Activated CD8-positive, alpha-beta T cell treated with anti-CD3 and anti-CD28 coated beads for 36 hours (primary cell): ENCODE measurements at regions of chr1 and their contacts with region 1.

Region 1: DNA sequence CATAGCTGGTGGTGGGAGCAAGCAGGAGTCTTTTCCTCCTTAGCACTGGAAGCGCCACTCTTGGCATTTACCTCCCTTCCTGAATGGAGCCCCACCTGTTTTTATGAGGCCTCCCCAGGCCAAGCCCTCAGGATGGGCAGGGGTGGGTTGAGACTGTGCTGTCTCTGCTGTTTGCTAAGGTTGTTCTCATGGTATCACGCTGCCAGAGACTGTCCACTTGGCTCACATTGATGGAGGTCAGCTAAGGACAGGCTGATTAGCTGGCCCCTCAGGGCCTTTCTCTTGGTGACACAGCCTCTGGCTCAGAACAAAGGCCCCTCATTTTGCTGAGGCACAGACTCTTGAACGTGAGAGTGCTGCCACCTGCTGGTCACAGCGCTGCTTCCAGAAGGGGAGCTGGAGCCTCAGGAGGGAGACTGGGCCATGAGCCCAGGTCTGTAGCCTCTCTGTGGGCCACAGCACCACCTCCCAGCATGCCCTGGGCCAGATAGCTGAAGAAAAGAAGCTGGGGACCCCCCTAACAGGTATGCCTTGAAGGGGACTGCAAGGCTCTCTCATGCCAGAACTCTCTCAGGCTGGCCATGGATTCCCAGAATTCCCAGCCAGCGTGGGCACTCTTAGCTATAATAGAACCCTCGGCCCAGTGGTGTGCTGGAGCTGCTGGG is 85.6 kb downstream of the CD58 start:
- DNase-seq: peak; percentile 95
- ATAC-seq: peak; percentile 96
- H3K4me3 Mint-ChIP-seq: no peak overlapping the region
- H3K27ac Mint-ChIP-seq: no peak overlapping the region
- H3K4me1 Mint-ChIP-seq: peaks cover 4% of the 10 kb centered on the region
- H3K27me3 Mint-ChIP-seq: no peaks in the 10 kb centered on the region
- CTCF ChIP-seq: peak; percentile 94

Region 2: GRCh38 chr1:116139592-116140134 is 345.5 kb before region 1 on chr1:
- CTCF ChIA-PET with region 1: interaction called, 460 read pairs
- POLR2A ChIA-PET with region 1: interaction called, 6 read pairs
- intact Hi-C with region 1: loop called (anchors 1 kb)
- DNase-seq: no peak
- ATAC-seq: no peak
- H3K4me3 Mint-ChIP-seq: no peak overlapping the region
- H3K27ac Mint-ChIP-seq: no peak overlapping the region
- H3K4me1 Mint-ChIP-seq: peaks cover 6% of the 10 kb centered on the region
- H3K27me3 Mint-ChIP-seq: peaks cover 2% of the 10 kb centered on the region
- CTCF ChIP-seq: no peak

Region 3: GRCh38 chr1:116321766-116322175 is 163.4 kb before region 1 on chr1:
- CTCF ChIA-PET with region 1: interaction called, 11 read pairs
- POLR2A ChIA-PET with region 1: no interaction called
- intact Hi-C with region 1: no loop called
- DNase-seq: no peak
- ATAC-seq: no peak
- H3K4me3 Mint-ChIP-seq: no peak overlapping the region
- H3K27ac Mint-ChIP-seq: no peak overlapping the region
- H3K4me1 Mint-ChIP-seq: peaks cover 49% of the 10 kb centered on the region
- H3K27me3 Mint-ChIP-seq: no peaks in the 10 kb centered on the region
- CTCF ChIP-seq: no peak

Region 4: DNA sequence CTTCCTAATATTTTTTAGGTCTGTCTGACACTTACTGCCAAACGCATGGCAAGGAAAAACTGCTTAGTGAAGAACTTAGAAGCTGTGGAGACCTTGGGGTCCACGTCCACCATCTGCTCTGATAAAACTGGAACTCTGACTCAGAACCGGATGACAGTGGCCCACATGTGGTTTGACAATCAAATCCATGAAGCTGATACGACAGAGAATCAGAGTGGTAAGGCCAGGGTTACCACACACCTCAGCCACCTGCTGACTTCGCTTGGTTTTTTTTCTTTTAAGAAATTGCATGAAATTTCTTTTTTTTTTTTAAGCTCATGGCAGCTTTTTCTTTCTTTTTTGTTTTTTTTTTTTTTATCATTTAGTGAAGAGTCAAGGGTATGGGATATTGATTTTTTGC is 95.0 kb before region 1 on chr1:
- CTCF ChIA-PET with region 1: interaction called, 13 read pairs
- POLR2A ChIA-PET with region 1: interaction called, 3 read pairs
- intact Hi-C with region 1: no loop called
- DNase-seq: peak; percentile 82
- ATAC-seq: peak; percentile 93
- H3K4me3 Mint-ChIP-seq: no peak overlapping the region
- H3K27ac Mint-ChIP-seq: no peak overlapping the region
- H3K4me1 Mint-ChIP-seq: peaks cover 55% of the 10 kb centered on the region
- H3K27me3 Mint-ChIP-seq: no peaks in the 10 kb centered on the region
- CTCF ChIP-seq: no peak

Region 5: DNA sequence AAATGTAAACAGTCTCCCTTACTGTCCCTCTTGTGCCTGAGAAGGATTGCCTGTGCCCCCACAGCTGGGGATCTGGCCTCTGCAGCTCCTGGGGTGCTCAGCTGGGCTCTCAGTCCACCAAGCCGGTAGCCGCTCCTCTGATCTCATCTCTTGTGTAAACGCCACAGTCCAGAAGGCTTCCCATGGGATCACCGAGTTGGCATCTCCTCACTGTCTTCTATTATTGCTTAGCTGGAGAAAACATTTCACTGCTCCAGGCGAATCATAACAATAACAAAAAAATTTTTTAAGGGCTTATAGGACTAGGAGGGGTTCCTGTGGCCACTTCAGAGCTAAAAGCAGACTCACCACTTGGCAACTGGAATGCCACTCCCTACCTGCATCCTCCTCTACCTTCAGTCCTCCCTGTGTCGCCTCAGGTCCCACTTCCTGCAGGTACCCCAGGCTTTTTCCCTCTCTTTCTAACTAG is 36.4 kb before region 1 on chr1:
- CTCF ChIA-PET with region 1: interaction called, 13 read pairs
- POLR2A ChIA-PET with region 1: no interaction called
- intact Hi-C with region 1: no loop called
- DNase-seq: no peak
- ATAC-seq: no peak
- H3K4me3 Mint-ChIP-seq: no peak overlapping the region
- H3K27ac Mint-ChIP-seq: no peak overlapping the region
- H3K4me1 Mint-ChIP-seq: no peaks in the 10 kb centered on the region
- H3K27me3 Mint-ChIP-seq: no peaks in the 10 kb centered on the region
- CTCF ChIP-seq: no peak

Region 6: DNA sequence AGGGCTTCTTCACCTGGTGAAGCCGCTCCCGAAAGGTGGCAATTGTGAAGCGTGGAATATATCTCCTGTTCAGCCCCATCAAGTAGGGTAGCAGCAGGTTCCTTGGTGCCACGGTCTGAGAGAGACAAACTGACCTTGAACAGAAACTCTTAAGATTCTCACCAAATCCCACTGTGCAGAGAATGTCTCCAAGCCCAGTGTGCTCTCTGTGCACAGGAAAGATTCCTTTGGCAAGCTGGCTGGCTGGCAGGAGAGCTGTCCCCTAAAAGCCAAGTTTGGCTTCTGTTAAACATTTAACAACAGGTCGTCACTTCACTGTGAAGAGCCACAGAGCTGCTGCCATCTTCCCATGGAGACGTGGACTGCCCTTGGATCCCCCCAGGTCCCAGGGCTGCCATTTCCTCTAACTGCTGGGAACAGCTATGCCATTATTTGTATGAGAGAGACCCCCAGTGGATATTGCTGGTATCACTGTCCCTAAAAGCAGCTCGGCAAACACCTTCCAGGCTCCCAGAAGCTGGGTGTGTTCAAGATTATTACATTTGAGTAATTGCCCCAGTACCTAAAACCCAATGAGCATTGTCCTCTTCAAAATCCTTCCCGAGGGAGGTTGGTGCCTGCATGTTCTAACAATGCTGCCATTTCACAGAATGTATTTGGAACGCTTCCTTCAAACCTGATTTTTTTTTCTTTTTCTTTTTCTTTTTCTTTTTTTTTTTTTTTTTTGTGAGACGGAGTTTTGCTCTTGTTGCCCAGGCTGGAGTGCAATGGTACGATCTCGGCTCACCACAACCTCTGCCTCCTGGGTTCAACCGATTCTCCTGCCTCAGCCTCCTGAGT is 13.8 kb after region 1 on chr1:
- CTCF ChIA-PET with region 1: interaction called, 177 read pairs
- POLR2A ChIA-PET with region 1: interaction called, 4 read pairs
- intact Hi-C with region 1: no loop called
- DNase-seq: peak; percentile 67
- ATAC-seq: peak; percentile 78
- H3K4me3 Mint-ChIP-seq: no peak overlapping the region
- H3K27ac Mint-ChIP-seq: no peak overlapping the region
- H3K4me1 Mint-ChIP-seq: peaks cover 23% of the 10 kb centered on the region
- H3K27me3 Mint-ChIP-seq: no peaks in the 10 kb centered on the region
- CTCF ChIP-seq: peak; percentile 88

Region 7: DNA sequence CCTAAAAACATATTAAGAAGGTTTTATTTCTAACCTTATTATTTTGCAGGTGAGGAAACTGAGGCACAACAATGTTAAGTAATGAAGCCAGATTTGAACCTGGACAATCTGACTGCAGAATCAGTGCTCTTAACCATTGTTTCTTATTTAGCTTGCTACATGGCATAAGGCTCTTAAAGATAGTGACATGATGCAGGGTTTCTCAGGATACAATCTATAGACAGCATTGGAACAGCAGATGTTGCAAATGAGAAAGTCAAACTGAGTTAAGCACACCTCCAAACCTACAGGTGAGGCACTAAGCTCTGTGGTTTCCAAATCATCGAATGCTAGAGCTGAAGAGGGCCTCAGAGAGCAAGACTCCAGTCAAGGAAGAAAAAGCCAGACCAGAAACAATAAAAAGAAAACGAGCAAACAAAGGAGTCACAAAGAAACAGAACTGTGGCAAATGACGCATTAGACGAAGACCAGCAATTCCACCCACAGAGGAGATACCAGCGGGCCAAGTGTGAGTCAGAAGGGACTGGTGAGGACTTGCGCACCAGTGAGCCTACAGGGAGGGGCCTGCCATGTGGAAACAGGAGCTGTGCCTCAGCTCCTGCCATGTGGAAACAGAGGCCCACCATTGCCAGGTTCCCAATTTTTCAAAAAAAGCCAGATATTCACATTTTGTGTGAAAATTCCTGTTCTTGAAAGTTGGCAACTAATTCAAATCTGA is 71.2 kb after region 1 on chr1:
- CTCF ChIA-PET with region 1: no interaction called
- POLR2A ChIA-PET with region 1: no interaction called
- intact Hi-C with region 1: no loop called
- DNase-seq: peak; percentile 84
- ATAC-seq: peak; percentile 95
- H3K4me3 Mint-ChIP-seq: peak overlapping the region; percentile 40
- H3K27ac Mint-ChIP-seq: peak overlapping the region; percentile 92
- H3K4me1 Mint-ChIP-seq: peaks cover 68% of the 10 kb centered on the region
- H3K27me3 Mint-ChIP-seq: no peaks in the 10 kb centered on the region
- CTCF ChIP-seq: no peak

Region 8: DNA sequence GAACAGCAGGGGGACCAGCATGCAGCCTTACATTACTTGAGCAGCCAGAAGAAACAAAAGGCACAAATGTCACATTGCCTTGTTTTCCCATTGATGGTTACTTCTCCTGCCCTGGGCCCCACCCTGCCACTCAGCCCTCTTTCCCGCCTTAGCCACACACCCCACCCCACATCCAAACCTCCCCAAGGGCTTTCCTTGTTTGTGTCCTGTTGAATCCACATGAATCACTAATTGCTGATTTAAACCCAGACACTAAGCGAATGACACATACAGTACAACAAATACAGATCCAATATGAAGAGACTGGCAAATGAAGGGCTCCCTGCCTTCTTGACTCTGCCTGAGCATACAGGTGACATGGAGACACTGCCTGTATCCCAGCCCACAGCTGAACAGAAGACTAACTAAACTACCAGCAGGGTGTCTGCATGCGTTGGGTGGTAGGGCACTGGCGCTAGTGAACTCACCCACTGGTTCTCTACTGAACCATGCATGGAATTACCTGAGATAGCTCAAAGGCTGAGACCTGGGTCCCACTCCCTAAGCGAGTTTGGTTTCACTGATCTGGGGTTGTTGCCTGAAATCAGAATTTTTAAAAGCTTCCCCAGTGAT is 179.3 kb after region 1 on chr1:
- CTCF ChIA-PET with region 1: no interaction called
- POLR2A ChIA-PET with region 1: no interaction called
- intact Hi-C with region 1: no loop called
- DNase-seq: no peak
- ATAC-seq: no peak
- H3K4me3 Mint-ChIP-seq: no peak overlapping the region
- H3K27ac Mint-ChIP-seq: no peak overlapping the region
- H3K4me1 Mint-ChIP-seq: peaks cover 9% of the 10 kb centered on the region
- H3K27me3 Mint-ChIP-seq: peaks cover 43% of the 10 kb centered on the region
- CTCF ChIP-seq: no peak

Region 9: DNA sequence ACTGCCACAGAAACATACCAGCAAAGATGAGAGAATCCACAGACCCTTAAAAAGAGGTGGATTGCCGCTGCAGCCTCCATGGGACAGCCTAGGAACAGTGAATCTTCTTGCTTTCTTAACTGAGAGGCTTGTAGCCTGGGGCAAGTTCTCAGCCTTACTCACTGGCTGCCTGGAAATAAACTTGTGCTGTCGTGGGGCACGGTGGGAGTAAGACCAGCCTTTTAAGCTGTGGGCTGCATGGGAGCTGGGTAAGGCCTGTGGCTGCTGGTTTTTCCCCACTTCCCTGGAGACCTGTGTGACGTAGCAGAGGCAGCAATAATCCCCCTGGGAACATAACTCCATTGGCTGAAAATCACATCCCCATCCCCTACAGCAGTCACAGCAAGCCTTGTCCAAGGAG is 299.8 kb after region 1 on chr1:
- CTCF ChIA-PET with region 1: no interaction called
- POLR2A ChIA-PET with region 1: no interaction called
- intact Hi-C with region 1: no loop called
- DNase-seq: no peak
- ATAC-seq: no peak
- H3K4me3 Mint-ChIP-seq: no peak overlapping the region
- H3K27ac Mint-ChIP-seq: no peak overlapping the region
- H3K4me1 Mint-ChIP-seq: peaks cover 18% of the 10 kb centered on the region
- H3K27me3 Mint-ChIP-seq: no peaks in the 10 kb centered on the region
- CTCF ChIP-seq: no peak